Kidney (tissue), 22 donors: ENCODE measurements at regions of chr16 and their contacts with region 1.

Region 1: DNA sequence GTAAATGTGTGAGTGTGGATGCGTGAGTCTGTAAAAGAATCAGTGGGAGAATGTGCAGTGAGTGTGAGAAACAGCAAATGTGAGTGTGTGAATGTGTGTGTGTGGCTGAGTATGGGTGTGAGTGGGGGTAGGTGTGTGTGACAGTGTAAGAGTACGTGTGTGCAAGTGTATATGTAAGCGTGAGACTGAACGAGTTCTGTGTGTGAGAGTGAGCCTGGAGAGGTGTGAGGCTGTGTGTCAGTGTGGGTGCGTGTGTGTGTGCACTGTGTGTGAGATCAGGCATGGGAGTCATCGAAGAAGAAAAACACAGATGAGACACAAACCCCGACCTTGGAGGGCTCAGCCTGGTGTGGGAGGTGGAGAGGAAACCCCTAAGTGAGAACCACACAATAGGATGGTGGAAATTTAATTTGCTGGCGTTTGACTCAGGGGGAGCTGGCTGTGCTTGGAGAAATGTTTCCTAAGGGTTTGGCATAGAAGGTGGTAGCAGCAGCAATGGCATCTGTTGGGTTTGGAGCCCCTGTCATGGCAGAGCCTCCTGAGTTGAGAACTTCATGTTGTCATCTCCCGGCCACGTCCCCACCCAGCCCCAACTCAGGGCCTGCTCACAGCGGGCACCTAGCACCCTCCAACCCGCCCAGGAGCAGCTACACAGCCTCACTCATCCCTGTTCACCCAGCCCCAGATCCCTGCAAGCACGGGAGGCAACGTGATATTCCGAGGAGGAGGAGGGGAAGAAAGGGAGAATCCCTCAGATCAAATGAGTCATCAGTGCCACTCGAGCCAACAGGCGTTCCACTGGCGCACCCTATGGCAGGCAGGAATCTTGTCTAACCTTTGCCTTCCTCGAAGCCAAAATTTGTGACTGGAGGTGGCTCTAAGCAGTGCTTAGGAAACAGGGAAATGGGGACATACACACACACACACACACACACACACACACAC is 14.3 kb upstream of the NUBP1 start:
- DNase-seq: peak in 2 of 5 donors; percentile 52 to 55
- H3K4me3 ChIP-seq: no peak overlapping the region
- H3K27ac ChIP-seq: no peak overlapping the region
- H3K4me1 ChIP-seq: no peaks in the 10 kb centered on the region
- H3K27me3 ChIP-seq: no peaks in the 10 kb centered on the region
- CTCF ChIP-seq: no peak

Region 2: DNA sequence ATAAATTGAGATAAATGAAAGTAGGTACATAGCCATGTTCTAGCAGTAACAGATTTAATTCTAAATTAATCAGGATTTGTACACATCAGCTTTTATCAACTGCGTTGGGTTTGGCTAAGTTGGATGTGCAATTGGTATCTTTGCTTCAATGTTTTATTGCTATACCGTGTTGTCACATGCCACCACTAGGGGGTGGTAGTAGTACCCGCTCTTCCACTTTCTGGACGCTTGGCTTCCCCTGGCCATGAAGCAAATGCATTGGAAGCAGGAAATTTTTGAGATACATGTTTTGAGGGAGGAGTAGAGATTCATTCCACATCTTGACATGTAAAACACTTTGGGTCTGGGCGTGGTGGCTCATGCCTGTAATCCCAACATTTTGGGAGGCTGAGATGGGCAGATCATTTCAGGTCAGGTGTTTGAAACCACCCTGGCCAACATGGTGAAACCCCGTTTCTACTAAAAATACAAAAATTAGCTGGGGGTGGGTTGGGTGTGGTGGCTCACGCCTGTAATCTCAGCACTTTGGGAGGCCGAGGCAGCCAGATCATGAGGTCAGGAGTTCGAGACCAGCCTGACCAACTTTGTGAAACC is 207.6 kb before region 1 on chr16:
- intact Hi-C with region 1: loop called (anchors 5 kb)
- DNase-seq: peak in 4 of 5 donors; percentile 68 to 88 (median 74)
- H3K4me3 ChIP-seq: no peak overlapping the region
- H3K27ac ChIP-seq: no peak overlapping the region
- H3K4me1 ChIP-seq: no peaks in the 10 kb centered on the region
- H3K27me3 ChIP-seq: no peaks in the 10 kb centered on the region
- CTCF ChIP-seq: peak; percentile 75